HCT116 (cell line): ENCODE measurements at regions of chr15 and their contacts with region 1.

Region 1: GRCh38 chr15:88337993-88338392 is 81.5 kb upstream of the NTRK3 start:
- DNase-seq: no peak
- ATAC-seq: peak; percentile 67
- H3K4me3 ChIP-seq: no peak overlapping the region
- H3K27ac ChIP-seq: no peak overlapping the region
- H3K4me1 ChIP-seq: no peaks in the 10 kb centered on the region
- H3K27me3 ChIP-seq: no peaks in the 10 kb centered on the region
- CTCF ChIP-seq: peak in 2 of 3 experiments; percentile 21 to 24; a peak in 1 of 6 replicates
- POLR2A ChIP-seq: no peak
- RAD21 ChIP-seq: no peak

Region 2: GRCh38 chr15:88440021-88440420 is 102.0 kb after region 1 on chr15:
- CTCF ChIA-PET with region 1: no interaction called
- POLR2A ChIA-PET with region 1: no interaction called
- RAD21 ChIA-PET with region 1: interaction called in 1 of 2 experiments, 3 read pairs
- intact Hi-C with region 1: loop called (anchors 5 kb)
- DNase-seq: no peak
- ATAC-seq: 0 out of 2 replicates have a peak, but pooled peaks have one; percentile 40
- H3K4me3 ChIP-seq: no peak overlapping the region
- H3K27ac ChIP-seq: no peak overlapping the region
- H3K4me1 ChIP-seq: peaks cover 0 to 4% of the 10 kb centered on the region in 2 experiments; a peak in 1 of 4 replicates
- H3K27me3 ChIP-seq: 0 out of 2 replicates have a peak, but pooled peaks cover 4% of the 10 kb centered on the region
- CTCF ChIP-seq: no peak
- POLR2A ChIP-seq: no peak
- RAD21 ChIP-seq: no peak